ENCODE measurements at regions of chr7 and their contacts with region 1.

Region 1: GRCh38 chr7:134316539-134317344 is at the start of gene SLC35B4:
- DNase-seq: peak; percentile 89
- ATAC-seq: peak; percentile 97
- H3K4me3 Mint-ChIP-seq: peak within 1 kb of the TSS; percentile 94
- H3K27ac Mint-ChIP-seq: peak within 1 kb of the TSS; percentile 87
- H3K4me1 Mint-ChIP-seq: peaks cover 14% of the 10 kb centered on the region
- H3K27me3 Mint-ChIP-seq: peaks cover 4% of the 10 kb centered on the region
- CTCF ChIP-seq: no peak
- total RNA-seq, gene SLC35B4: 17.1 and 22.0 TPM in 2 replicates

Region 2: GRCh38 chr7:133081599-133082389 is 1234.9 kb before region 1 on chr7 and contains the start of gene CHCHD3:
- CTCF ChIA-PET with region 1: no interaction called
- POLR2A ChIA-PET with region 1: interaction called, 8 read pairs
- intact Hi-C with region 1: loop called (anchors 1 kb)
- DNase-seq: peak; percentile 91
- ATAC-seq: peak; percentile 98
- H3K4me3 Mint-ChIP-seq: peak within 1 kb of the TSS; percentile 94
- H3K27ac Mint-ChIP-seq: peak within 1 kb of the TSS; percentile 94
- H3K4me1 Mint-ChIP-seq: peaks cover 30% of the 10 kb centered on the region
- H3K27me3 Mint-ChIP-seq: no peaks in the 10 kb centered on the region
- CTCF ChIP-seq: no peak
- total RNA-seq, gene CHCHD3: 53.6 and 56.3 TPM in 2 replicates

Region 3: DNA sequence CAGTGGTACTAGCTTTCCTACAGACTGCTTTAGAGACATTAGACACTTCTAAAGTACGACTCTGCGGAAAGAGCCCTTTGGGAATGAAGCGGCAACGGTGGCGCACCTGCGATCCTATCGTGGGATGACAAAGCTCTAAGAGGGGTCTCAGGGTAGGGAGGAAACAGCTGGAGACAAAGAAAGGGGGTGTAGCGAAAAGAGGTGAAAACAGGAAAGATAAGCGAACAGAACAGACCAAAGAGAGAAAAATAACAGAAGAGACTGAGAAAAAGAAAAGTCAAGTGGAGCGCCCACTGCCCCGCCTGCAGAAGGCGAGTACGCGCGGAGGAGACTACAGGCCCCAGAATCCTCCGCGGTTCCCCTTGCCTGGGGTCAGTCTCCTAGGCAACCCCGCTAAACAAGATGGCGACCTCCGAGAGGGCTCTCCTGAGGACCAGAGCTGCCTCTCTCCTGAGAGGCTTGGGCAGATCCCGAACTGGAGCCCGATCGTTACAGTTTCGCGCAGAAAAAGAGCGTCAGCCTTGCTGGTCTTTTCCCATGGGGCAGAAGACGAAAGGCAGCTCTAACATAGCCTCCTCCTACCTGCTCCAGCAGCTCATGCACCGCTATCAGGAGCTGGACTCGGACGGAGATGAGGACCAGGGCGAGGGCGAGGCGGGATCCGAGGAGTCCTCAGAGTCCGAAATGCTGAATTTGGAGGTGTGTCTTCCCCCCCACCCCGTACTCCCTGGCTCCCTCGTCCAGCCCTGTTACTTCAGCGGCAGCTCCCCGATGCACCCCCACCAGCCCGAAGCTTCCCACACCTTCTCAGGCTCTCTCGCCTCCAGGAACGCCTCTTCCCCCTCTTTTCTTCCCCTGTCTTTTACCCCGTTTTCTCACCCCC is 189.5 kb before region 1 on chr7 and contains the start of gene LRGUK:
- CTCF ChIA-PET with region 1: no interaction called
- POLR2A ChIA-PET with region 1: interaction called, 5 read pairs
- intact Hi-C with region 1: loop called (anchors 1 kb)
- DNase-seq: peak; percentile 65
- ATAC-seq: peak; percentile 100
- H3K4me3 Mint-ChIP-seq: peak within 1 kb of the TSS; percentile 88
- H3K27ac Mint-ChIP-seq: no peak within 1 kb of the TSS
- H3K4me1 Mint-ChIP-seq: peaks cover 12% of the 10 kb centered on the region
- H3K27me3 Mint-ChIP-seq: peaks cover 4% of the 10 kb centered on the region
- CTCF ChIP-seq: no peak
- total RNA-seq, gene LRGUK: 0.91 and 1.0 TPM in 2 replicates

Region 4: GRCh38 chr7:134262322-134262721 is 54.4 kb before region 1 on chr7:
- CTCF ChIA-PET with region 1: no interaction called
- POLR2A ChIA-PET with region 1: no interaction called
- intact Hi-C with region 1: no loop called
- DNase-seq: no peak
- ATAC-seq: no peak
- H3K4me3 Mint-ChIP-seq: no peak overlapping the region
- H3K27ac Mint-ChIP-seq: no peak overlapping the region
- H3K4me1 Mint-ChIP-seq: no peaks in the 10 kb centered on the region
- H3K27me3 Mint-ChIP-seq: no peaks in the 10 kb centered on the region
- CTCF ChIP-seq: no peak

Region 5: DNA sequence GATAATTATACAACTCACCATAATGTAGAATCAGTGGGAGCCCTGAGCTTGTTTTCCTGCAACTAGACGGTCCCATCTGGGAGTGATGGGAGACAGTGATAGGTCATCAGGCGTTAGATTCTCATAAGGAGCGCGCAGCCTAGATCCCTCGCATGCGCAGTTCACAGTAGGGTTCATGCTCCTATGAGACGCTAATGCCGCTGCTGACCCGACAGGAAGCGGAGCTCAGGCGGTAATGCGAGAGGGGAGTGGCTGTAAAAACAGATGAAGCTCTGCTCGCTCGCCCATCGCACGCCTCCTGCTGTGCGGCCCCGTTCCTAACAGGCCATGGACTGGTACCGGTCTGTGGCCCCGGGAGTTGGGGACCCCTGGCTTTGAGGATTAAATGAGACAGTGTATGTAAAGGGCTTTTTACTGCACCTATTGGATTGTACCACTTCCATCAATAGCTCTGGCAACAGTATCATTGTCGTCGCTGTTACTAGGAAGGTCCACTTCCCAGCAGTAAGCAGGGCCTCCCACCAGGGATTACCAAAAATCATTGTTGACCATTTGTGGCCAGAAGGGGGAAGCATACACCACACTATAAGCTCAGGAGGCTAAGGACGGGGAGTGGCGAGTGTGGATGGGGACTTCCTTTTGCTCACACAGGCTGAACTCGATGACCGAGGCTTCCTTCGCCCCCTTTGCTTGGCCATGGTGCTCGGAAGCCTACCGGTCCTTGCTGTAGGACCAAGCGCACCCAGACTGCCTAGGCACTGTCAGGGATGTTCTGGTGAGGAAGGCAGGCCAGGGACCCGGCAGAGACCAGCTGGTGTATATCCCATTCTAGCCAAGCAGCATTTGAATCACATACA is 115.8 kb after region 1 on chr7:
- CTCF ChIA-PET with region 1: no interaction called
- POLR2A ChIA-PET with region 1: no interaction called
- intact Hi-C with region 1: loop called (anchors 1 kb)
- DNase-seq: peak; percentile 56
- ATAC-seq: peak; percentile 89
- H3K4me3 Mint-ChIP-seq: peak overlapping the region; percentile 82
- H3K27ac Mint-ChIP-seq: peak overlapping the region; percentile 82
- H3K4me1 Mint-ChIP-seq: peaks cover 20% of the 10 kb centered on the region
- H3K27me3 Mint-ChIP-seq: no peaks in the 10 kb centered on the region
- CTCF ChIP-seq: no peak

Region 6: GRCh38 chr7:135509903-135510602 is 1193.3 kb after region 1 on chr7 and contains the start of gene CNOT4:
- CTCF ChIA-PET with region 1: no interaction called
- POLR2A ChIA-PET with region 1: no interaction called
- intact Hi-C with region 1: loop called (anchors 2 kb)
- DNase-seq: peak; percentile 87
- ATAC-seq: peak; percentile 96
- H3K4me3 Mint-ChIP-seq: no peak within 1 kb of the TSS
- H3K27ac Mint-ChIP-seq: no peak within 1 kb of the TSS
- H3K4me1 Mint-ChIP-seq: peaks cover 10% of the 10 kb centered on the region
- H3K27me3 Mint-ChIP-seq: no peaks in the 10 kb centered on the region
- CTCF ChIP-seq: no peak
- total RNA-seq, gene CNOT4: 34.4 and 36.8 TPM in 2 replicates

Region 7: GRCh38 chr7:135662373-135663114 is 1345.8 kb after region 1 on chr7 and contains the start of gene STMP1:
- CTCF ChIA-PET with region 1: no interaction called
- POLR2A ChIA-PET with region 1: no interaction called
- intact Hi-C with region 1: loop called (anchors 1 kb)
- DNase-seq: peak; percentile 96
- ATAC-seq: peak; percentile 98
- H3K4me3 Mint-ChIP-seq: peak within 1 kb of the TSS; percentile 91
- H3K27ac Mint-ChIP-seq: peak within 1 kb of the TSS; percentile 79
- H3K4me1 Mint-ChIP-seq: peaks cover 39% of the 10 kb centered on the region
- H3K27me3 Mint-ChIP-seq: no peaks in the 10 kb centered on the region
- CTCF ChIP-seq: no peak
- total RNA-seq, gene STMP1: 24.2 and 26.2 TPM in 2 replicates